ENCODE measurements at regions of chr1 and their contacts with region 1.

Region 1: DNA sequence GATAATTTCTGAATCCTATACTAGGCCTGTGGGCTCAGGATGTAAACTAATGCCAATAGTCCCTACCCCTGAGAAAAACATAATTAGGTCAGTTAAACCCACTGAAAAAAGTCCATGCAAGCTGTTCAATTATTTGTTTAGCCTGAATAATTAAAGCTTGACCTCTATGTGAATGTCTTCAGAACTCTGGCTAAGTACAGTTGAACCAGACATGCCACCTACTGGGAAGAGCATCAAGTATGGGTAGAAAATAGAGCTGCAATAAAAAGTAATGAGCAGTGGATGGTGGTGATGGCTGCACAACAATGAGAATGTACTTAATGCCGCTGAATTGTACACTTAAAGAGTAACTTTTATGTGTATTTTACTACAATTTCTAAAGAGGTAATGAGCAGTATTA is 23.6 kb upstream of the SLC19A2 start:
- DNase-seq: peak in 1 of 4 experiments; percentile 34
- ATAC-seq: peak; percentile 61
- H3K4me3 ChIP-seq: no peak overlapping the region
- H3K27ac ChIP-seq: peak overlapping the region; percentile 77; the same call in 2 of the 3 replicates
- H3K4me1 ChIP-seq: peaks cover 0 to 14% of the 10 kb centered on the region in 2 experiments; a peak in 2 of 5 replicates
- H3K27me3 ChIP-seq: no peaks in the 10 kb centered on the region
- CTCF ChIP-seq: no peak
- EP300 ChIP-seq: no peak
- POLR2A ChIP-seq: no peak
- RAD21 ChIP-seq: peak in 1 of 2 experiments; percentile 41; a peak in 2 of 4 replicates

Region 2: GRCh38 chr1:169466259-169467230 is 42.8 kb before region 1 on chr1:
- CTCF ChIA-PET with region 1: no interaction called
- POLR2A ChIA-PET with region 1: interaction called, 3 read pairs
- in situ Hi-C with region 1: no loop called
- intact Hi-C with region 1: loop called (anchors 1 kb)
- DNase-seq: peak in 3 of 4 experiments; percentile 34 to 53 (median 42)
- ATAC-seq: peak; percentile 79
- H3K4me3 ChIP-seq: no peak overlapping the region
- H3K27ac ChIP-seq: no peak overlapping the region
- H3K4me1 ChIP-seq: no peaks in the 10 kb centered on the region
- H3K27me3 ChIP-seq: no peaks in the 10 kb centered on the region
- CTCF ChIP-seq: peak; percentile 39 to 66 (median 47); a peak in 5 of 6 replicates
- EP300 ChIP-seq: no peak
- POLR2A ChIP-seq: no peak
- RAD21 ChIP-seq: peak; percentile 70 to 79